ENCODE measurements at regions of chr4 and their contacts with region 1.

Region 1: DNA sequence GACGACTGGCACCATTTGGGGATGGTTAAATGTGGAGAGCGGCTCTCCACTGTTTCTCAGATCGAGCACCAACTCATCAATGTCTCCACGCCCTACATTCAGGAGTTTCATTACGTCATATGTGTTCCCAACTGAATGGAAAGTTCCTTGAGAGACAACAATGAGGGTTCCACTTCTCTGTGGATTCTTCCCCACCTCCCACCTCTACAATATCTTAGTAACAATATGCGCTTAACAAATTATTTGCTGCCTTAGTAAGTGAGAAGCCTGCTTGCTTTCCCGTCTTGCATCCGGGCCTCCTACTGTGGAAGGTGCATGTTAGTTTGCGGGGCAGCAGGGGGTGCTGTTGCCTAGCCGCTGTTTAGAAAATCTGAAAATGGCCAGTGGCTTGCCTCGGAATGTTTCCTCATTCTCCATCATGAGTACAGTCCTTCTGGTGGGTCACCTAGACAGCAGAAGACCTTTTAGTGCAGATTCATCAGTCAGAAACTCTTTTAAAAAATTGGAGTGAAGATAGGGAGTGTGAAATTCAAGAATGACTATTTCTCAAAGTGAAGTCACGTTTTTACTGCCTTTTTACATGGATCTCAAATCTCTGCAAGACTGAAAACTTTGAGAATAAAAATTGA is 55.7 kb downstream of the PHOX2B start:
- DNase-seq: peak; percentile 50 to 64
- H3K4me3 ChIP-seq: no peak overlapping the region
- H3K4me3 Mint-ChIP-seq: no peak overlapping the region
- H3K27ac Mint-ChIP-seq: no peak overlapping the region
- H3K4me1 ChIP-seq: no peaks in the 10 kb centered on the region
- H3K4me1 Mint-ChIP-seq: peaks cover 12% of the 10 kb centered on the region
- H3K27me3 ChIP-seq: no peaks in the 10 kb centered on the region
- H3K27me3 Mint-ChIP-seq: no peaks in the 10 kb centered on the region
- CTCF ChIP-seq: peak; percentile 82 to 93

Region 2: GRCh38 chr4:41196633-41197332 is 496.0 kb before region 1 on chr4:
- CTCF ChIA-PET with region 1: no interaction called
- POLR2A ChIA-PET with region 1: no interaction called
- intact Hi-C with region 1: no loop called
- DNase-seq: no peak
- H3K4me3 ChIP-seq: no peak overlapping the region
- H3K4me3 Mint-ChIP-seq: no peak overlapping the region
- H3K27ac Mint-ChIP-seq: no peak overlapping the region
- H3K4me1 ChIP-seq: no peaks in the 10 kb centered on the region; the same call in 1 of the 2 replicates
- H3K4me1 Mint-ChIP-seq: peaks cover 12% of the 10 kb centered on the region
- H3K27me3 ChIP-seq: no peaks in the 10 kb centered on the region
- H3K27me3 Mint-ChIP-seq: no peaks in the 10 kb centered on the region
- CTCF ChIP-seq: no peak

Region 3: GRCh38 chr4:41281038-41281634 is 411.7 kb before region 1 on chr4:
- CTCF ChIA-PET with region 1: interaction called, 4 read pairs
- POLR2A ChIA-PET with region 1: no interaction called
- intact Hi-C with region 1: loop called (anchors 1 kb)
- DNase-seq: peak; percentile 54 to 70
- H3K4me3 ChIP-seq: no peak overlapping the region
- H3K4me3 Mint-ChIP-seq: no peak overlapping the region
- H3K27ac Mint-ChIP-seq: no peak overlapping the region
- H3K4me1 ChIP-seq: no peaks in the 10 kb centered on the region
- H3K4me1 Mint-ChIP-seq: no peaks in the 10 kb centered on the region
- H3K27me3 ChIP-seq: no peaks in the 10 kb centered on the region
- H3K27me3 Mint-ChIP-seq: no peaks in the 10 kb centered on the region
- CTCF ChIP-seq: peak; percentile 62 to 73

Region 4: DNA sequence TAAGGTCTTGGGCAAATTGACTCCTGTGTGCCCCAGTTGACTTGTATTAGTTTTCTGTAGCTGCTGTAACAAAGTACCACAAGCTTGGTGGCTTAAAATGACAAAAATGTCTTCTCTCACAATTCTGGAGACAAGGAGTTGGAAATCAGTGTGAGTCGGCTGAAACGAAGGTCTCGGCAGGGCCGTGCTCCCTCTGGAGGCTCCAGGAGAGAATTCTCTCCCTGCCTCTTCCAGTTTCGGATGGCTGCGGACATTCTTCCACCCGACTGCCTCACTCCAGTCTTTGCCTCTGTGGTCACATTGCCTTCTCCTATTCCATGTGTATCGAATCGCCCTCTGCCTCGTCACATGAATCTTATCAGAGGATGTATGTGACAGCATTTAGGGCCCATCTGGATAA is 121.7 kb after region 1 on chr4:
- CTCF ChIA-PET with region 1: no interaction called
- POLR2A ChIA-PET with region 1: no interaction called
- intact Hi-C with region 1: loop called (anchors 1 kb)
- DNase-seq: peak in 1 of 2 experiments; percentile 15
- H3K4me3 ChIP-seq: no peak overlapping the region
- H3K4me3 Mint-ChIP-seq: no peak overlapping the region
- H3K27ac Mint-ChIP-seq: no peak overlapping the region
- H3K4me1 ChIP-seq: no peaks in the 10 kb centered on the region
- H3K4me1 Mint-ChIP-seq: no peaks in the 10 kb centered on the region
- H3K27me3 ChIP-seq: no peaks in the 10 kb centered on the region
- H3K27me3 Mint-ChIP-seq: peaks cover 16% of the 10 kb centered on the region
- CTCF ChIP-seq: peak in 1 of 2 experiments; percentile 31

Region 5: GRCh38 chr4:41882625-41883347 is 190.0 kb after region 1 on chr4:
- CTCF ChIA-PET with region 1: no interaction called
- POLR2A ChIA-PET with region 1: no interaction called
- intact Hi-C with region 1: loop called (anchors 1 kb)
- DNase-seq: peak in 1 of 2 experiments; percentile 38
- H3K4me3 ChIP-seq: no peak overlapping the region
- H3K4me3 Mint-ChIP-seq: no peak overlapping the region
- H3K27ac Mint-ChIP-seq: no peak overlapping the region
- H3K4me1 ChIP-seq: no peaks in the 10 kb centered on the region
- H3K4me1 Mint-ChIP-seq: no peaks in the 10 kb centered on the region
- H3K27me3 ChIP-seq: no peaks in the 10 kb centered on the region; the same call in 1 of the 2 replicates
- H3K27me3 Mint-ChIP-seq: no peaks in the 10 kb centered on the region
- CTCF ChIP-seq: peak; percentile 79 to 84

Region 6: DNA sequence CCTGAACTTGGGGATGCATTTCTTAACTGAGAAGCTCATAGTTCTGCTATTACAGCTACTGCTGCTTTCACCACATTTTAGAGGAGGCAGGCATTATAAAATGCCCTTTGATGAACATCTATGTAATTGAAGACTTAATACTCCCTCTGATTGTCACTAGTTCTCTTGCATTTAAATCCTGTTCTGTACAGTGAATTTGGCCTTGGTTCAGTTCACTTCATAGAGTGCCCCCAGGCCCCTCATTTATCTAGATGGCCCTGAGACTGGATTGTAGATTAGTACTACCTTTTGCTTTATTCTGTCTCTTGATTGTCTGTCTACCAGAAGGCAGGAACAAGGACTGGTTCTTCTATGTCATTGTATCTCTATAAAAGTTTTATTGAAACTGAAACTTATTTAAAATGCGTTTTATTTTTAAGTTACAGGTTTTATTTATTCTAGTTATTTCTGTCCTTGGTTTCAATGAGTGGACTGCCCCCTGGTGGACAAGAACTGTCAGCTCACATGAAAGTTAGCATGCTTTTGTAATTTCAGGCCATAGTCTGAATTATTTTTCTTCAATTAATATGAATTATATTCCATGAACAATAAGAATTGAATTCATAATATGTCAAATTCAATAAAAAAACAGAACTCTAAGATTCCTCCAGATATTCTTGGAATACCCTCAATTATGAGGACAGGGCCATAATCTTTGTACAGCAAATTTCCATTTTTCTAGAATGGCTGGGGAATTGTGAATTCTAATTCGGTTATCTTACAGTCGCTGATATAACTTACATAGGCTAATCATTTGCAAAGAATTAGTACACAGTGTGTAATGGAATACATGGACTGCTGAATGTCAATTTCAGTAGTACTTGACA is 195.2 kb after region 1 on chr4:
- CTCF ChIA-PET with region 1: interaction called, 3 read pairs
- POLR2A ChIA-PET with region 1: no interaction called
- intact Hi-C with region 1: loop called (anchors 1 kb)
- DNase-seq: peak in 1 of 2 experiments; percentile 44
- H3K4me3 ChIP-seq: no peak overlapping the region
- H3K4me3 Mint-ChIP-seq: no peak overlapping the region
- H3K27ac Mint-ChIP-seq: no peak overlapping the region
- H3K4me1 ChIP-seq: no peaks in the 10 kb centered on the region
- H3K4me1 Mint-ChIP-seq: no peaks in the 10 kb centered on the region
- H3K27me3 ChIP-seq: no peaks in the 10 kb centered on the region; the same call in 1 of the 2 replicates
- H3K27me3 Mint-ChIP-seq: no peaks in the 10 kb centered on the region
- CTCF ChIP-seq: peak; percentile 68 to 78

Region 7: GRCh38 chr4:41963105-41963504 is 270.3 kb after region 1 on chr4:
- CTCF ChIA-PET with region 1: no interaction called
- POLR2A ChIA-PET with region 1: no interaction called
- intact Hi-C with region 1: loop called (anchors 2 kb)
- DNase-seq: peak in 1 of 2 experiments; percentile 34
- H3K4me3 ChIP-seq: no peak overlapping the region
- H3K4me3 Mint-ChIP-seq: no peak overlapping the region
- H3K27ac Mint-ChIP-seq: no peak overlapping the region
- H3K4me1 ChIP-seq: no peaks in the 10 kb centered on the region
- H3K4me1 Mint-ChIP-seq: no peaks in the 10 kb centered on the region
- H3K27me3 ChIP-seq: no peaks in the 10 kb centered on the region
- H3K27me3 Mint-ChIP-seq: no peaks in the 10 kb centered on the region
- CTCF ChIP-seq: peak in 1 of 2 experiments; percentile 38

Measured in Caco-2 (cell line).